Caco-2 (cell line): ENCODE measurements at regions of chr20 and their contacts with region 1.

Region 1: GRCh38 chr20:45044084-45044573 is 56.8 kb downstream of the KCNS1 start:
- DNase-seq: peak; percentile 67 to 80
- H3K4me3 ChIP-seq: no peak overlapping the region
- H3K4me3 Mint-ChIP-seq: no peak overlapping the region
- H3K27ac Mint-ChIP-seq: no peak overlapping the region
- H3K4me1 ChIP-seq: peaks cover 4% of the 10 kb centered on the region; the same call in 1 of the 2 replicates
- H3K4me1 Mint-ChIP-seq: peaks cover 6% of the 10 kb centered on the region
- H3K27me3 ChIP-seq: no peaks in the 10 kb centered on the region
- H3K27me3 Mint-ChIP-seq: no peaks in the 10 kb centered on the region
- CTCF ChIP-seq: peak; percentile 97 to 99

Region 2: GRCh38 chr20:44891826-44892225 is 152.3 kb before region 1 on chr20:
- CTCF ChIA-PET with region 1: no interaction called
- POLR2A ChIA-PET with region 1: no interaction called
- intact Hi-C with region 1: no loop called
- DNase-seq: no peak
- H3K4me3 ChIP-seq: no peak overlapping the region
- H3K4me3 Mint-ChIP-seq: no peak overlapping the region
- H3K27ac Mint-ChIP-seq: no peak overlapping the region
- H3K4me1 ChIP-seq: peaks cover 24% of the 10 kb centered on the region
- H3K4me1 Mint-ChIP-seq: peaks cover 31% of the 10 kb centered on the region
- H3K27me3 ChIP-seq: no peaks in the 10 kb centered on the region
- H3K27me3 Mint-ChIP-seq: no peaks in the 10 kb centered on the region
- CTCF ChIP-seq: no peak

Region 3: DNA sequence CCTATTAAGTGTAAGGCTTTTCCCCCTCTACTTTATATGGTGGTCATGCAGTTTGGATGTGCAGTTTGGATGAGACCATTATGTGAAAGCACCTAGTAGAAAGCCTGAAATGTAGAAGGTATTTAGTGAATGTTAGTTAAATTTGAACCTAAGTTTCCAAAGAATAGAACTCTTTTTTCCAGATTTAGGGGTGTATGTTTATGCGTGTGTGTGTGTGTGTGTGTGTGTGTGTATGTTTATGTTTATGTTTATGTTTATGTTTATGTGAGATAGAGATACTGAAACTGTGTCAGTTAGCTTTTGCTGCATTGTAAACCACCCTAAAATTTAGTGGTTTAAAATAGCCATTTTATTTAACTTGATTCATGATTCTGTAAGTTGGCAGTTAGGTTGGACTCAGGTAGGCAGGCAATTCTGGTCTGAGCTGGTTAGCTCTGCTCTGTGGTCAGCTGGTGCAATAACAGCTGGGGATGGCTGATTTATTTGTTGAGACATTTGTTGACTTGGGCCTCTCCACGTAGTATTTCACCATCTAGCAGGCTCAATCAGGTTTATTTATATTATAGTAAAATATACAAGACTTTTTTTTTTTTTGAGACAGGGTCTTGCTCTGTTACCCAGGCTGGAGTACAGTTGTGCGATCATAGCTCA is 23.8 kb before region 1 on chr20:
- CTCF ChIA-PET with region 1: interaction called, 20 read pairs
- POLR2A ChIA-PET with region 1: no interaction called
- intact Hi-C with region 1: no loop called
- DNase-seq: peak; percentile 46 to 68
- H3K4me3 ChIP-seq: no peak overlapping the region
- H3K4me3 Mint-ChIP-seq: no peak overlapping the region
- H3K27ac Mint-ChIP-seq: no peak overlapping the region
- H3K4me1 ChIP-seq: peaks cover 35% of the 10 kb centered on the region
- H3K4me1 Mint-ChIP-seq: peaks cover 36% of the 10 kb centered on the region
- H3K27me3 ChIP-seq: no peaks in the 10 kb centered on the region
- H3K27me3 Mint-ChIP-seq: no peaks in the 10 kb centered on the region
- CTCF ChIP-seq: no peak

Region 4: GRCh38 chr20:45080867-45081624 is 36.9 kb after region 1 on chr20:
- CTCF ChIA-PET with region 1: interaction called, 14 read pairs
- POLR2A ChIA-PET with region 1: no interaction called
- intact Hi-C with region 1: no loop called
- DNase-seq: peak in 1 of 2 experiments; percentile 67
- H3K4me3 ChIP-seq: no peak overlapping the region
- H3K4me3 Mint-ChIP-seq: no peak overlapping the region
- H3K27ac Mint-ChIP-seq: no peak overlapping the region
- H3K4me1 ChIP-seq: peaks cover 12% of the 10 kb centered on the region
- H3K4me1 Mint-ChIP-seq: peaks cover 6% of the 10 kb centered on the region
- H3K27me3 ChIP-seq: no peaks in the 10 kb centered on the region
- H3K27me3 Mint-ChIP-seq: no peaks in the 10 kb centered on the region
- CTCF ChIP-seq: peak; percentile 67 to 75

Region 5: GRCh38 chr20:45104786-45105185 is 60.7 kb after region 1 on chr20:
- CTCF ChIA-PET with region 1: interaction called, 71 read pairs
- POLR2A ChIA-PET with region 1: no interaction called
- intact Hi-C with region 1: no loop called
- DNase-seq: no peak
- H3K4me3 ChIP-seq: no peak overlapping the region
- H3K4me3 Mint-ChIP-seq: no peak overlapping the region
- H3K27ac Mint-ChIP-seq: no peak overlapping the region
- H3K4me1 ChIP-seq: no peaks in the 10 kb centered on the region
- H3K4me1 Mint-ChIP-seq: peaks cover 6% of the 10 kb centered on the region
- H3K27me3 ChIP-seq: peaks cover 2% of the 10 kb centered on the region; the same call in 1 of the 2 replicates
- H3K27me3 Mint-ChIP-seq: no peaks in the 10 kb centered on the region
- CTCF ChIP-seq: no peak

Region 6: DNA sequence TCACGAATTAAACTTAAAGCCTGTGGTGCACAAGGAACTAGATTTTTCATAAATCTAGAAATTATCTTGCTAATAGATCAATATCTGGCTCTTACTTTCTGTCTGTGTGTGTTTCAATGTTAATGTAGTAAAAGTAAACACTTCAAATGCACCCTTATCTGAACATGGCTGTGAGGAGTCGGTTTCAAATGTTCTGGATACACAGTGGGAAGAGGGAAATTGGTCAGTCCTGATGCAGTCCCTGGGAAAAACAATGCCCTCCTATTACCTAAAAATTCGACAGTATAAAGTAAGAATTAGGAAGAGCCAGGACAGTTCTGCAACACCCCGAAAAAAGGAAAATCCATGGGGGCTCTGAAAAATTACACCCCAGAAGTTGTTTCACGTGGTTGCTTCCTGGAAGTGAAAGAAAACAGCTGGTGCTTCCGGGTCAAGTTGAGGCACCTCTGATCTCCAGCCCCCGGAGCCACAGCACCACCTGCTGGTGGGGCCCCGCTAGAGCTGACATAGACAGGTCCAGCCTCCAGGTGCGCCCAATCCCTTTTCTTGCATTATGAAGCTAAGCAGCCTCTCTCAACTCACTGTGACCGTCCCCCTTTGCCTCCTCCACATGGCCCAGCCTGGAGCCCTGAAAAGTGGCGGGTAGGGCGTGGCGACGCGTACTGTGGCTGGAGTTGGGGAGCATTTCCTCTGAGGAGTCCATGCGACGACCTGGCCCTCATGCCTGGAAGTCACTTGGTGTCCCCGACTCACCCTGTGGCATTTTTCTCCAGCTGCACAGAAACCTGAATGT is 185.3 kb after region 1 on chr20:
- CTCF ChIA-PET with region 1: interaction called, 16 read pairs
- POLR2A ChIA-PET with region 1: no interaction called
- intact Hi-C with region 1: loop called (anchors 5 kb)
- DNase-seq: peak; percentile 68 to 81
- H3K4me3 ChIP-seq: no peak overlapping the region
- H3K4me3 Mint-ChIP-seq: peak overlapping the region; percentile 18
- H3K27ac Mint-ChIP-seq: no peak overlapping the region
- H3K4me1 ChIP-seq: no peaks in the 10 kb centered on the region
- H3K4me1 Mint-ChIP-seq: no peaks in the 10 kb centered on the region
- H3K27me3 ChIP-seq: no peaks in the 10 kb centered on the region
- H3K27me3 Mint-ChIP-seq: peaks cover 33% of the 10 kb centered on the region
- CTCF ChIP-seq: peak; percentile 83 to 93